ENCODE measurements at regions of chr15 and their contacts with region 1.

Region 1: DNA sequence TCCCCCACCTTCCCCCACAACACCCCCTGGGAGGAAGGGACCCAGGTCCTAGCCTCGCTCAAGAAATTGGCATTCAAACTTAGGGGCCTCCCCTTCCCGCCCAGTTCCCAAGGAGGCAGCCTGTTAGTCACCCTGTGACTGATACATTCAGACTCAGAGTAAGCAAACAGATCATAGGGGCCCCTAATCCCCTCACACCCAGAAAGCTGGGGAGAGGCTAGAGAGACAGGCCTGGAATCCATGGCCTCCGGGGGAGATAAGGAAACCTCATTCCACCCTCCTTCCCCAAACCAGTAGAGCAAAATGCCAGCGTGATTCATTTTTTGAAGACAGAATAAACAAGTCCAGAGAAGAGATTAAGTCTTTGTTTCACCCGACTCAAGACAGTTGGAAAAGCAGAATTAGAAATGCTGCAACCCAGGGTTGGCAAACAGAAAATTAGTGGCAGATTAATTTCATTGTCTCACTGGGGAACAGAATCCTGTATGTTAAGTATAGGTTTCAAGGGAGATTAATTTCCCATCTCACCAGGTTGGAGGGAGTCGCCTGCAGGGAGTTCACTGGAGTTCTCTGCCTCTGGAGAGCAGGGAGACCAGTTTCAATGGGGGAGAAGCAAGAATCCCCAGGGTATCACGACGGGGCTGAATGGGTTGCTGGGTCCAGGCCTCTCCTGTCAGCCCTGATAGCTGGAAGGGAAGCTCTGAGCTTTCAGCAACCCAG is 268.3 kb downstream of the UACA start:
- DNase-seq: peak; percentile 96
- ATAC-seq: peak; percentile 88
- H3K4me3 ChIP-seq: no peak overlapping the region
- H3K27ac ChIP-seq: peak overlapping the region; percentile 18; the same call in 1 of the 2 replicates
- H3K4me1 ChIP-seq: peaks cover 36% of the 10 kb centered on the region
- H3K27me3 ChIP-seq: peaks cover 9% of the 10 kb centered on the region
- CTCF ChIP-seq: no peak
- POLR2A ChIP-seq: no peak
- RAD21 ChIP-seq: peak; percentile 11; the same call in 1 of the 2 replicates

Region 2: DNA sequence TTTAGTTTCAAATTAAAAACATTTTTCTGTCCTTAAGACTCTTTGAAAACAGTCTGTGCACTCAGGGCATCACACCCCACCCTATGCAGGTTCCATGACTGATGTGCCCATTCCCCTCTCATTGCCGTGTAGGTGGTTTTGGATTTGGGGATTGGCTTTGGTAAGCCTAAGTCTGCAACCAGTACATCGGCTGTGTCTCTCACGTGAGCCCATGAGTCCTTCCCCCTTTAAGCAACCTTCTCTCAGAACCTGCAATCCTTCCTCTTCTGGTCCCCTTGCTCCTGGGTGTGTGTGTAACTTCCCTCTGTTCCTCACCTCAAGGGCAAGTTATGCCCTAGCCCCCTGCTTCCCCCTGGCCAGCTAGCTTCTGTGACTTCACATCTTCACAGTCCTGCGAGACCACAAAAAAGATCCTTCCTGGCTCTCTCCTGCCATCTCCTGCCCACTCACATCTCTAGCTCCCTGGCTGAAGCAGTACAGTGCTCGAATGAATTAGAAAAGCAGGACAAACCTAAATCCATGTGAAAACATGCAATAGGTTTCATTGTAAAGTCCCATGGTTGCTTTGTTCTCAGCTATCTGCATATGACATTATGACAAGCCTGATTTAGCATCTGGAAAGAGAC is 141.6 kb after region 1 on chr15:
- CTCF ChIA-PET with region 1: no interaction called
- POLR2A ChIA-PET with region 1: no interaction called
- dilution Hi-C with region 1: no loop called
- in situ Hi-C with region 1: no loop called
- intact Hi-C with region 1: loop called (anchors 5 kb)
- DNase-seq: no peak
- ATAC-seq: peak; percentile 38; the same call in 1 of the 2 replicates
- H3K4me3 ChIP-seq: no peak overlapping the region
- H3K27ac ChIP-seq: no peak overlapping the region
- H3K4me1 ChIP-seq: peaks cover 2% of the 10 kb centered on the region; the same call in 1 of the 2 replicates
- H3K27me3 ChIP-seq: no peaks in the 10 kb centered on the region
- CTCF ChIP-seq: peak; percentile 44
- POLR2A ChIP-seq: no peak
- RAD21 ChIP-seq: peak; percentile 47

Measured in IMR-90 (cell line).